HCT116 (cell line): ENCODE measurements at regions of chr20 and their contacts with region 1.

Region 1: DNA sequence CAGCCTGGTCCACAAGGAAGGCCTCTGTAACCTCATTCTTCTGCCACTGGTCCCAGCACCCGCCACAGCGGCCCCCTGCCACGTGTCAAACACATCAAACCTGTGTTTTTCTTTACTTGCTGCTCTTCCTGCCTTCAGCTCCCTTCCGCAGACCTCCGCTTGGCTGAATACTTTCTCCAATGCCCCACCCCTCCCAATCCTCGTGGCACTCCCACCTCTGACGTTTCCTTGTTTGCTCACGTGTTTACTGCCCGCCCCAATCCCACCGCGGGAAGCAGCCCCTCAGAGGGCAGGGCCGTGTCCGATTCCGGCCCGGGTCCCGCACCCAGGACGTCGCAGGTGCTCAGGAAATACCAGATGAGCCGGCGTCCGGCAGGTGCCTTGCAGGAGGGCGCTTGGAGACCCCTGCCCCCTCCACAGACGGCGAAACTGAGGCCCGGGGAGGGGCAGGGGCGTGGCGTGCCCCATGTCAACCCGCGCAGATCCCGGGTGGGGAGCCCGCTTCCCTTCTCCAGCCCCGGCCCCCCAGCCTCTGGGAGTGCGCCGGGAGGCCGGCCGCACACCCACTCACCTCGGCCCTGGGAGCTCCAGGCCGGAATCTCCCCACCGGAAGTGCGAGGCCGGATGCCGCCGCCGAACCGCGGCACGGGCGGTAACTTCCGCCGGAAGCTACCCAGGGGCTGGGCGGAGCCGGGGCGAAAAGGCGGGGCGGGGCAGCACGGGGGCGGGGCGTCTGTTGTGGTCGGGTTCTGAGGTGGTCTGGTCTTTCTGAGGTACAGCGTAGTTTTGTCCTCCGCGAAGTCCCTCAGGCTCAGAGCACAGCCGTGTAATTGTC is 42.4 kb downstream of the ELMO2 start:
- DNase-seq: peak; percentile 59
- ATAC-seq: peak; percentile 94
- H3K4me3 ChIP-seq: peak overlapping the region; percentile 79 to 95
- H3K27ac ChIP-seq: peak overlapping the region; percentile 99
- H3K4me1 ChIP-seq: peaks cover 6 to 26% of the 10 kb centered on the region in 2 experiments; a peak in 3 of 4 replicates
- H3K27me3 ChIP-seq: no peaks in the 10 kb centered on the region
- CTCF ChIP-seq: no peak
- POLR2A ChIP-seq: no peak
- RAD21 ChIP-seq: no peak

Region 2: GRCh38 chr20:46341074-46342009 is 22.7 kb before region 1 on chr20:
- CTCF ChIA-PET with region 1: no interaction called
- POLR2A ChIA-PET with region 1: no interaction called
- RAD21 ChIA-PET with region 1: no interaction called
- intact Hi-C with region 1: no loop called
- DNase-seq: no peak
- ATAC-seq: no peak
- H3K4me3 ChIP-seq: no peak overlapping the region
- H3K27ac ChIP-seq: no peak overlapping the region
- H3K4me1 ChIP-seq: no peaks in the 10 kb centered on the region
- H3K27me3 ChIP-seq: peaks cover 27% of the 10 kb centered on the region; the same call in 1 of the 2 replicates
- CTCF ChIP-seq: no peak
- POLR2A ChIP-seq: no peak
- RAD21 ChIP-seq: no peak

Region 3: DNA sequence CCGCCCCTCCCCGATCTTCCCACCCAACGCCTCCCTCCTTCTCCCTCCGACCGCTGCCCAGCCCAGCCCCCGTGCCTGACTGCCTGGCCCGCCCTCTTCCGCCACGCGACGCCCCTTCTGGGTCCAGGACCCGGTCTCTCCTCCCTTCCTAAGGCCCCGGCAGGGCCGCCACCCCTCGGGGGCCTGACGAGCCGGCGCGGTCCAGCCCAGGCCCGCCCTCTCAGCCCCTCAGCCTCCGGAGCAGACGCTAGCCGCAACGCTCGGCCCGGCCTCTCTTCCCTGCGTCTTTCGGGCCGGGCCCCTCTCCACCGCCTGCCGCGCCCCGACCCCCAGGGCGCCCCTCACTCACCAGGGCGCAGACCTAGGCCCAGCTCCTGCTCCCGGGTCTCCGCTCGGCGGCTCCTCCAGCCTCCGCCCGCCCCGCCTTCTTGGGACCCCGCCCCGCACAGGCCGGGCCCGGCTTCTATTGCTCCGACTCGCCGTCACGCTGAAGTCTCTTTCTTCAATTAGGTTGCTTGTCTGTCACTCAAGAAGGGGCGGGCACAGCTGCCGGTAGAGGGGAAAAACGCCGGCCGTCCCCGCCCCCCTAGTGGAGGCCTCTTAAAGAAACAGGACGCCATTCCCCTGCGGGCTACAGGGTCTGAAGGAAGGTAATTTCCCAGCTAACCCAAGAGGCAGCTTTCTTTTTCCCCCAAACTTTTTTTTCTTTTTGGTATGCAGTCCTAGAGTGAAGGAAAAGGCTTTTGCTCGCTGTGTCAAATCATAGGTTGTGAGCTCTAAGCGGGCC is 42.4 kb after region 1 on chr20 and contains the start of gene ELMO2:
- CTCF ChIA-PET with region 1: no interaction called
- POLR2A ChIA-PET with region 1: interaction called, 5 read pairs
- RAD21 ChIA-PET with region 1: no interaction called
- intact Hi-C with region 1: loop called (anchors 1 kb)
- DNase-seq: peak; percentile 89
- ATAC-seq: peak; percentile 89
- H3K4me3 ChIP-seq: peak within 1 kb of the TSS; percentile 68 to 84
- H3K27ac ChIP-seq: peak within 1 kb of the TSS; percentile 68
- H3K4me1 ChIP-seq: peaks cover 15 to 32% of the 10 kb centered on the region in 2 experiments
- H3K27me3 ChIP-seq: no peaks in the 10 kb centered on the region
- CTCF ChIP-seq: no peak
- POLR2A ChIP-seq: no peak
- RAD21 ChIP-seq: no peak
- total RNA-seq, gene ELMO2: 22.9 TPM